Psoas muscle (tissue), 8 donors: ENCODE measurements at regions of chr2 and their contacts with region 1.

Region 1: GRCh38 chr2:9142551-9143263 is 63.9 kb upstream of the ASAP2 start:
- DNase-seq: peak; percentile 89 to 93
- ATAC-seq: peak; percentile 92 to 97 (median 95)
- H3K4me3 ChIP-seq: peak overlapping the region; percentile 39
- H3K27ac ChIP-seq: peak overlapping the region; percentile 27
- H3K4me1 ChIP-seq: no peaks in the 10 kb centered on the region
- H3K27me3 ChIP-seq: peaks cover 0 to 6% (median 0%) of the 10 kb centered on the region in 3 donors
- CTCF ChIP-seq: peak; percentile 99

Region 2: DNA sequence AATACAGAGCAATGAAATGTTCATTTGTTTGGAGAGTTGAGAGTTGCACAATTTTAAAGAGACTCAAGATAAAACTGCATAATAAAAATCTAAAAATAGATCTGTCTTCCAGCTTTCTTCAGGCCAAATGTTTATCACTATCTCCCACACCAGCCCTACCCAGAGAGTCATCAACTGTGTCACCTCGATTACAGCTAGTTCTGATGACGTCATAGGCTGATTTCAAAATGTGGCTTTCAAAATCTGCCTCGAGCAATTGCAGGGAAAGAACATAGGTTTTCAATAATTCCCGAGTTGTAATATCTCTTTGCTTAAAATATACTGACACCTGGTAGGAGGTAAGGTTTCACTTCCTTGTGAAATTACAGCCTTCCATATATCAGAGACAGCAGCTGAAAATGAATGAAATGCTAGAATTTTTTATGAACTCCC is 1138.4 kb before region 1 on chr2:
- intact Hi-C with region 1: no loop called
- DNase-seq: no peak
- ATAC-seq: peak; percentile 78 to 91 (median 84)
- H3K4me3 ChIP-seq: peak overlapping the region; percentile 35
- H3K27ac ChIP-seq: peak overlapping the region; percentile 81
- H3K4me1 ChIP-seq: peaks cover 13% of the 10 kb centered on the region
- H3K27me3 ChIP-seq: no peaks in the 10 kb centered on the region
- CTCF ChIP-seq: no peak

Region 3: DNA sequence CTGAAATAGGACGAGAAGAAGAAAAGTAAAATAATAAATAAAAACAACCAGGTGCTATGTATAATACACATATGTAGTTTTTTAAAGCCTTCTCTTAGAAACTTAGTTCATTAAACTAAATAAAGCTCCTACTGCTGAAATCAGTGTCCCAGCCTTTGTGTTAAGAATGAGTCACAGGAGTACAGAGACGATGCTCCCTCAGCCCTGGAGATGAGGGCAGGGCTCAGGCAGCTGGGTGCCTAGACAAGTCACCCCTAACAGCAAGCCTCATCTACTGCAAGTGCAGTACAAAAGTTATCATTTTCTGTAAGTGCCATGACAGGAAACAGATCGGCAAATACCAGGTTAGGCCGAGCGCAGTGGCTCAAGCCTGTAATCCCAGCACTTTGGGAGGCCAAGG is 323.5 kb before region 1 on chr2:
- intact Hi-C with region 1: no loop called
- DNase-seq: no peak
- ATAC-seq: peak; percentile 38 to 63 (median 52)
- H3K4me3 ChIP-seq: no peak overlapping the region
- H3K27ac ChIP-seq: peak overlapping the region; percentile 31
- H3K4me1 ChIP-seq: peaks cover 43% of the 10 kb centered on the region
- H3K27me3 ChIP-seq: no peaks in the 10 kb centered on the region
- CTCF ChIP-seq: no peak

Region 4: GRCh38 chr2:8872821-8873432 is 269.8 kb before region 1 on chr2:
- intact Hi-C with region 1: loop called (anchors 5 to 10 kb)
- DNase-seq: no peak
- ATAC-seq: peak in 2 of 4 donors; percentile 41 to 60
- H3K4me3 ChIP-seq: no peak overlapping the region
- H3K27ac ChIP-seq: no peak overlapping the region
- H3K4me1 ChIP-seq: no peaks in the 10 kb centered on the region
- H3K27me3 ChIP-seq: no peaks in the 10 kb centered on the region
- CTCF ChIP-seq: peak; percentile 65

Region 5: DNA sequence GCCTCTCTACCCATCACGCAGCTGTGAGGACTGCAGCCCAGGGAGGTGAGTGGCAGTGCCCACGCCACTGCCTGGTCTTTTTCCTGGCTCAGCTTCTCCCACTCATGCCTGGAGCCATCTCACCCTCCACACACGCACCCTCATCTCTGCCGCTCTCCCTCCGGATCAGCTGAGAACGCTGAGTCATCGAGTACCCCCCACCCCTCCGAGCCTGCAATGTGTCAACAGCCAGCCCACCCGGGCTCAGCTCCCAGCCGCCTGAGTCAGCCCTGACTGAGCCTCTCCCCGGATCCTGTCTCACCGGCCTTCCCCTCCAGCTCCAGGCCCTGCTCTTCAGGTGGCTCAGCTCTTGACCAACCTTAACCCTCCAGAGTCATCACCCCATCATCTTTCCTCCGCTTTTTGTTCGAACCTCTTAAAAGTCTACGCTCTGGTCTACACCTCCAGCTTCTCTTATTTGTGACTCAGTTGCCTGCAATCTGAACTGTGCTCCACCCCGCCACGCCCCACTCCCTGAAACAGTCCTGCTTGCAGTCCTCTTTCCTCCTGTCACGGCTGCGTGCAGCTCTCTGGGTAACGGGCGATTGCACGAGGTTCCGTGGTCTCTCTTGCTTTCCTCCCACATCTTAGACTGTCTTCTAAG is 30.5 kb before region 1 on chr2:
- intact Hi-C with region 1: no loop called
- DNase-seq: peak in 1 of 2 donors; percentile 59
- ATAC-seq: peak in 1 of 4 donors; percentile 37
- H3K4me3 ChIP-seq: no peak overlapping the region
- H3K27ac ChIP-seq: no peak overlapping the region
- H3K4me1 ChIP-seq: no peaks in the 10 kb centered on the region
- H3K27me3 ChIP-seq: no peaks in the 10 kb centered on the region
- CTCF ChIP-seq: no peak

Region 6: GRCh38 chr2:9205963-9206948 is 63.5 kb after region 1 on chr2 and contains the start of gene ASAP2:
- intact Hi-C with region 1: loop called in 1 of 2 experiments (anchors 2 kb)
- DNase-seq: peak; percentile 80 to 86
- ATAC-seq: peak; percentile 73 to 88 (median 87)
- H3K4me3 ChIP-seq: peak within 1 kb of the TSS; percentile 79
- H3K27ac ChIP-seq: peak within 1 kb of the TSS; percentile 65
- H3K4me1 ChIP-seq: no peaks in the 10 kb centered on the region
- H3K27me3 ChIP-seq: peaks cover 0 to 18% (median 0%) of the 10 kb centered on the region in 3 donors
- CTCF ChIP-seq: peak; percentile 73
- total RNA-seq, gene ASAP2: 2.5 to 9.0 (median 4.1) TPM

Region 7: DNA sequence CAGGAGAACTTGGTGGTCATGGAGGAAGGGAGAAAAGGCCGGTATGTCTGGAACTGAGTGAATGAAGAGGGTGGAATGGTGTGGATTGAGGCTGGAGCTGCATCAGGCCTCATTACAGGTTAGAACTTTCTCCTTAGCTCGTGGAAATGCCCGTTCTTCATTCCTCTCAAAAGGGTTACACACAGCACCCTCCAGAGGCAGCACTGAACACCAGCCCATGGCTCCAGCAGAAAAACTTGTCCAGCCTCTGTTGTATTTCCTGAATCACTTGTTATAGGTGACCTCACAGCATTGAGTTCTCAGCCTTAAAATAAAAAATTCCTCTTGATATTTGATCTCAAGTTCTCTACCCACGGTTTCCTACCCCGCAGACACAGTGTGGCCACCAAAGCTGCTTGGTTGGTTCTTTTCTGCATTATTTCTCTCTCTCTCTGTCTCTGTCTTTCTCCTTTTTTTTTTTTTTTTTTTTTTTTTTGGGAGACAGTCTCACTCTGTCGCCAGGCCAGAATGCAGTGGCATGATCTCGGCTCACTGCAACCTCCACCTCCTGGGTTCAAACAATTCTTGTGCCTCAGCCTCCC is 191.0 kb after region 1 on chr2:
- intact Hi-C with region 1: loop called (anchors 1 to 5 kb)
- DNase-seq: peak; percentile 41 to 62
- ATAC-seq: peak; percentile 75 to 94 (median 86)
- H3K4me3 ChIP-seq: no peak overlapping the region
- H3K27ac ChIP-seq: no peak overlapping the region
- H3K4me1 ChIP-seq: peaks cover 3% of the 10 kb centered on the region
- H3K27me3 ChIP-seq: no peaks in the 10 kb centered on the region
- CTCF ChIP-seq: peak; percentile 71

Region 8: GRCh38 chr2:9356292-9356691 is 213.6 kb after region 1 on chr2:
- intact Hi-C with region 1: no loop called
- DNase-seq: no peak
- ATAC-seq: no peak
- H3K4me3 ChIP-seq: no peak overlapping the region
- H3K27ac ChIP-seq: no peak overlapping the region
- H3K4me1 ChIP-seq: no peaks in the 10 kb centered on the region
- H3K27me3 ChIP-seq: no peaks in the 10 kb centered on the region
- CTCF ChIP-seq: no peak

Region 9: DNA sequence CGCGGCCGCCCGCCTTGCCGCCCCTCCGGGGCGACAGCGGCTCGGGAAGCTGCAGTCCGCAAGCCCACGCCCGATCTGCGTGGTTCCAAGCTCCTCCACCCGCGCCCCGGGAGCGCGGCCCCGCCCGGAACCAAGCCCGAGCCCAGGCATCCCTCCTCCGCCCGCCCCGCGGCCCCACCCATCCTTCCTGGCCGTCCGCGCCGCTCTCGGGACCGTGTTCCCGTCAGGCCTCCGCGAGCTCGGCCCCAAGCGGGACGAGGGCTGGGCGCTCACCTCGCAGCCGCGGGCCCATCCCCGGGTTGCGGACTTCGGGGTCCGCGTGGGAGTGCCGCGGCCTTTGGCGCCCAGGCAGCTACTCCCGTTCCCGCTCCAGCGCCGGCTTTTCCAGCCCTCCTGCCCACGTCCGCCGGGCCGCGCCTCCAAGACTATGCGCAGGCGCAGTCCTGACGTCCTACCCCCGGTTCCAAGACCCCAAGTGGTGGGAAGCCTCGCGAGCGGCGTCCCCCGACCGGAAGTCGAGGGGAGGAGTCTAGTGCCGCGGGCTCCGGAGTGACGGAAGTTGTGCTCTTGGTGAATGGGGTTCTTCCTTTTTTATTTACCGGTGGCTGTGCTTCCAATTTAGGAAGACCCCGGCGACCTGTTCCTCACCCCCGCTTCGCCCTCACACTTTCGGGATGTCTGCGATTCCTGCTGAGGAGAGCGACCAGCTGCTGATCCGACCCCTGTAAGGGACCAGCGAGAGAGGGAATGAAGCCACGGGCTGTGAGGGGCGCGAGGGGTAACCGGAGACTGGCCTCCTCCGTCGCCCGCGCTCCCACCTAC is 280.6 kb after region 1 on chr2 and contains the starts of genes CPSF3 and ITGB1BP1:
- intact Hi-C with region 1: loop called in 1 of 2 experiments (anchors 10 kb)
- DNase-seq: peak; percentile 98 to 99
- ATAC-seq: peak; percentile 97 to 98 (median 98)
- H3K4me3 ChIP-seq: peak within 1 kb of the TSS; percentile 89
- H3K27ac ChIP-seq: peak within 1 kb of the TSS; percentile 86
- H3K4me1 ChIP-seq: peaks cover 35% of the 10 kb centered on the region
- H3K27me3 ChIP-seq: no peaks in the 10 kb centered on the region
- CTCF ChIP-seq: no peak
- total RNA-seq, gene CPSF3: 14.4 to 21.8 (median 17.8) TPM
- total RNA-seq, gene ITGB1BP1: 47.5 to 138 (median 69.2) TPM